ENCODE measurements at regions of chrX and their contacts with region 1.

Region 1: GRCh38 chrX:136147315-136147901 is at the start of gene FHL1:
- DNase-seq: peak; percentile 69
- H3K4me3 ChIP-seq: peak within 1 kb of the TSS; percentile 44 to 70 (median 61)
- H3K27ac ChIP-seq: peak within 1 kb of the TSS; percentile 88 to 94 (median 90)
- H3K4me1 ChIP-seq: peaks cover 0 to 5% (median 2%) of the 10 kb centered on the region in 4 donors
- H3K27me3 ChIP-seq: no peaks in the 10 kb centered on the region
- CTCF ChIP-seq: no peak
- EP300 ChIP-seq: no peak
- POLR2A ChIP-seq: no peak
- total RNA-seq, gene FHL1: 139 to 617 (median 162) TPM

Region 2: DNA sequence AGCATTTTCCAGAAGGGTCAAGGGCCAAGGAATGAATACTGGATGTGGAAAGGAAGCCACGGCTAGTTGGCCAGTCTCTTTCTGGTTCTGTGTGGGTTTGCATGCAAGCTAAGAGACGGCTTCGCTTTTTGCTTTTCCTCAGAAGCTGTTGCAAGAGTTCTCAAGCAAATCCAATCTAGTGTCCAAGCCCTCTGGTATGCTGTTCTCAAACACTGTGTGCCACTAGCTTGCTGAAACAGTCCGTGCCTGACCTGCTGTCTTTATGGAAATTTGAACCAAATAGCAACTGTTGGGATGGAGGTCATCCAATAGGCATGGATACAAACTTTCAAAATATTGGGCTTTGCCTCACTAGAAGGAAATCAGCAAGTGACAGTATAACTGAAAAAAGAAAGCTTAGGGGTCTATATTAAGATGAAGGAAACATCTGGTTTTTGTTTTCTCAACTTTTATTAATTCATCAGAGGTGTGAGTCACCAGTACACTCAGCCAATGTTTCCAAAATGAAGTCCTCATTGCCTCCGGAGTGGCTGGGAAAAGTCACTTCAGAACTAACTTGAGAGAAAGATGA is 91.7 kb before region 1 on chrX:
- in situ Hi-C with region 1: no loop called
- intact Hi-C with region 1: loop called (anchors 5 kb)
- DNase-seq: no peak
- H3K4me3 ChIP-seq: no peak overlapping the region
- H3K27ac ChIP-seq: peak overlapping the region; percentile 67 to 84 (median 81)
- H3K4me1 ChIP-seq: peaks cover 0 to 6% (median 0%) of the 10 kb centered on the region in 4 donors
- H3K27me3 ChIP-seq: no peaks in the 10 kb centered on the region
- CTCF ChIP-seq: no peak
- EP300 ChIP-seq: peak; percentile 81
- POLR2A ChIP-seq: peak; percentile 37

Measured in transverse colon (tissue), 4 donors.